HepG2 (cell line): ENCODE measurements at regions of chr16 and their contacts with region 1.

Region 1: GRCh38 chr16:87874639-87875465 is 5.5 kb upstream of the SLC7A5 start:
- DNase-seq: no peak
- ATAC-seq: no peak
- H3K4me3 ChIP-seq: no peak overlapping the region
- H3K27ac ChIP-seq: no peak overlapping the region
- H3K4me1 ChIP-seq: peaks cover 79% of the 10 kb centered on the region
- H3K27me3 ChIP-seq: no peaks in the 10 kb centered on the region
- CTCF ChIP-seq: no peak
- EP300 ChIP-seq: no peak
- POLR2A ChIP-seq: no peak
- RAD21 ChIP-seq: no peak

Region 2: DNA sequence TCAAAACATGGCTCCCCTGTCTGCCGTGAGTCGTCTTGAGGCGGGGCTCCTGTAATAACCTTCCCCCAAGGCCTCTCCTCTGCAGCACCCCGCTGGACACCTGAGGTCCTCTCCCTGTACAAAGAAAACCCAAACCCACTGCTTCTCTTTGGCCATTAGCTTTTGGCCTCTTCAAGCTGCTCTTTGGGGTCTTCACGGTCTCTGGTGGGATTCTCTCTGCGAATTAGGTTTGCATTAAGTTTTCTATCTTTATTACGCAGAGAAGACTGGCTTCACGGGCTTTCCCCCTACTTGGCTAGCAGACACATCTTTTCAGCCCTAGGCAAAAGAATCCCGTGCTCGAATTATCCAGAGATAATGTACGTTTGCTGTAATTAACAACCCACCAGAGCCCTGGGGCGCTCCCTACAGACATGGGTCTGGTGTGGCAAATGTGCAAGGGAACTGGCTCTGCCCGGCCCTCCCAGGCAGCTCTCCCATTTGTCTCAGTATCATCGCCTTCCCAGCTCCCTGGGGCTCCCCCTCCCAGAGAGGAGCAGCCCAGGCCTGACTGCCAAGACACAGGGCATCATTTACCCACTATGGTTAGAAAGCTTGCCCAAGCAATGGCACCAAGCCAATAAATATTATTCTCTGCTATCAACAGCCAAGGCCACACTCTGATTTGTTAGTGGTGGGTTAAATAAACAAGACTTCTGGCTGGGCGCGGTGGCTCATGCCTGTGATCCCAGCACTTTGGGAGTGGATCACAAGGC is 84.4 kb before region 1 on chr16:
- CTCF ChIA-PET with region 1: interaction called, 4 read pairs
- POLR2A ChIA-PET with region 1: interaction called, 60 read pairs
- in situ Hi-C with region 1: no loop called
- intact Hi-C with region 1: no loop called
- DNase-seq: no peak
- ATAC-seq: peak; percentile 8; the same call in 2 of the 3 replicates
- H3K4me3 ChIP-seq: peak overlapping the region in 1 of 3 experiments; percentile 64; a peak in 2 of 6 replicates
- H3K27ac ChIP-seq: peak overlapping the region; percentile 88
- H3K4me1 ChIP-seq: peaks cover 77% of the 10 kb centered on the region
- H3K27me3 ChIP-seq: no peaks in the 10 kb centered on the region
- CTCF ChIP-seq: no peak
- EP300 ChIP-seq: no peak
- POLR2A ChIP-seq: no peak
- RAD21 ChIP-seq: no peak

Region 3: DNA sequence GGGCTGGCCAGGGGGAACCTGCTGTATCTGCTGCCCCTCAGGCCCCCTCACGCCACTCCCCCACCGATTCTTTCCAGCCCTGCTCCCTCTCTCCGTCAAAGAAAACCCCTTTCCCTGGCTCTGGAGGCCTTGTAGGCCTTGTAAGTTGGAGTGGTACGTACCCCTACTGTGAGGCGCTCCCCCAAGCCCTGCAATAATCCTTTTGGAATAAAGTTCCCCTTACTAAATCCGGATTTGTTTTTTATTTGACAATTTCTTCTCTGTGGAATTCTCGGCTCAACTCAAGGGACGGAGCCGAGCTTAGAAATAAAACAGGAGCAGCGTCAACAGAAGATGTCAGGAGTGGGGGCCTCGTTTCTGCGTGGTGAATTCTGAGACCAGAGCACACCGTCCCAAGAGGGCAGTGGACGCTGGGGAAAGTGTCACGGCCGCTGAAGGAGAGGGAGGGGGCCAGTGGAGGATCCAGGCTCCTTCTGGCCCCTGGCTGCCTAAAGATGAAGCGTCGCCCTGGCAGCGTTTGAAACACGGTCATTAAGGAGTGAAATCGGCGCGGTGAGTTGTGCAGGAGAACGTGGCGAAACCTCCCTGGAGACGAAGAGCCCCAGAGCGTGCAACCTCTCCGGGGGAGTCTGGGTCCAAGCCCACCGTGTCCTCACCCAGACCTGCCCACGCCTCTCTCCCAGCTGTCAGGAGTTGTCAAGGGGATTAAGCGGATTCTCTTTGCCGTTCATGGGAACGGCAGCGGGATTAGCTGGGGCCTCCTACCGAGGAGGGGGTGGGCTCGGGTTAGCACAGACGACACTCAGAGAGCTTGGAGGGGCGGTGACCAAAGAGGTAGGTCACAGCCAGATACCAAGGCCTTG is 52.5 kb before region 1 on chr16:
- CTCF ChIA-PET with region 1: no interaction called
- POLR2A ChIA-PET with region 1: interaction called, 15 read pairs
- in situ Hi-C with region 1: no loop called
- intact Hi-C with region 1: loop called (anchors 1 kb)
- DNase-seq: no peak
- ATAC-seq: no peak
- H3K4me3 ChIP-seq: no peak overlapping the region
- H3K27ac ChIP-seq: no peak overlapping the region
- H3K4me1 ChIP-seq: peaks cover 70% of the 10 kb centered on the region
- H3K27me3 ChIP-seq: peaks cover 13 to 69% of the 10 kb centered on the region in 2 experiments
- CTCF ChIP-seq: no peak
- EP300 ChIP-seq: no peak
- POLR2A ChIP-seq: no peak
- RAD21 ChIP-seq: no peak

Region 4: GRCh38 chr16:87842209-87842869 is 32.5 kb before region 1 on chr16:
- CTCF ChIA-PET with region 1: interaction called, 47 read pairs
- POLR2A ChIA-PET with region 1: interaction called, 399 read pairs
- in situ Hi-C with region 1: no loop called
- intact Hi-C with region 1: no loop called
- DNase-seq: peak; percentile 51
- ATAC-seq: peak; percentile 18
- H3K4me3 ChIP-seq: no peak overlapping the region
- H3K27ac ChIP-seq: peak overlapping the region; percentile 76
- H3K4me1 ChIP-seq: peaks cover 90% of the 10 kb centered on the region
- H3K27me3 ChIP-seq: no peaks in the 10 kb centered on the region
- CTCF ChIP-seq: no peak
- EP300 ChIP-seq: peak; percentile 41 to 66; a peak in 3 of 4 replicates
- POLR2A ChIP-seq: 0 out of 4 replicates have a peak, but pooled peaks of 1 of the 2 experiments have one; percentile 7
- RAD21 ChIP-seq: peak; percentile 7; the same call in 1 of the 2 replicates

Region 5: DNA sequence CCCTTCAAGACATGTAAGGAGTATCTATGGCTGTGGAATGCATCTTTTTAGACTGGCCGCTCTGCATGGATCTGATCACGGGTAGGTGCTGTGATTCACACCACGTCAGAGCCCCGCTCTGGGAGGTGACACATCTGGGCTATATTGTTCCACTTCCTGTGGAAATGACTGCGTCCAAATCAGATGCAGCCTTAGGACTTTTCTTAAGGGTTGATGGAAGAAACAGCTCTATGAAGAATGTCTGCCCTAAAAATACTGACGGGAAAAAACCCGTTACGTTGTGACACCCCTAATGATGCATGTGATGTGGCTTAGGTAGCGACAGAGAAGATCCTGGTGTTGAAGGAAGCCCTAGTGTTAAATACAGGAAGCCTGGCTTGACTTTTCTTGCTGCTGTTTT is 88.5 kb after region 1 on chr16:
- CTCF ChIA-PET with region 1: no interaction called
- POLR2A ChIA-PET with region 1: no interaction called
- in situ Hi-C with region 1: no loop called
- intact Hi-C with region 1: no loop called
- DNase-seq: no peak
- ATAC-seq: no peak
- H3K4me3 ChIP-seq: no peak overlapping the region
- H3K27ac ChIP-seq: no peak overlapping the region
- H3K4me1 ChIP-seq: peaks cover 41% of the 10 kb centered on the region
- H3K27me3 ChIP-seq: no peaks in the 10 kb centered on the region
- CTCF ChIP-seq: no peak
- EP300 ChIP-seq: no peak
- POLR2A ChIP-seq: no peak
- RAD21 ChIP-seq: no peak

Region 6: DNA sequence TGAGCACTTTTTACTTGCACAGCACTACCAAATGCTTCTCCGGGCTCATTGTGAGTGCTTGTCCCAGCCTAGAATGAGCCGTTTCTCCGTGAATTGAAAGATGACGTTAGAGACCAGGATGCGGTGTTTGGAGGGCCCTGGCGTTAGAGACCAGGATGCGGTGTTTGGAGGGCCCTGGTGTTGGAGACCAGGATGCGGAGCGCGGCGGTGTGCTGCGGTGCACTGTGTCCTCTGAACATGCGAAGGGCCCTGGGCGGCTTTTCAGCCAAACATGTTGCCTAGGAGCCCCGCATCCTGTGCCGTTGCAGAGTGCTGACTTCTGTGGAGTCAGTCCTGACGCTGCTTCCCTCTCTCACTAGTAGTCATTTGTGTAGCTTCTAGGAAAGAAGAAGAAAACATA is 119.0 kb after region 1 on chr16:
- CTCF ChIA-PET with region 1: no interaction called
- POLR2A ChIA-PET with region 1: no interaction called
- in situ Hi-C with region 1: no loop called
- intact Hi-C with region 1: no loop called
- DNase-seq: no peak
- ATAC-seq: no peak
- H3K4me3 ChIP-seq: no peak overlapping the region
- H3K27ac ChIP-seq: no peak overlapping the region
- H3K4me1 ChIP-seq: peaks cover 11% of the 10 kb centered on the region; the same call in 1 of the 2 replicates
- H3K27me3 ChIP-seq: no peaks in the 10 kb centered on the region
- CTCF ChIP-seq: no peak
- EP300 ChIP-seq: no peak
- POLR2A ChIP-seq: no peak
- RAD21 ChIP-seq: no peak